ENCODE measurements at regions of chr3 and their contacts with region 1.

Region 1: DNA sequence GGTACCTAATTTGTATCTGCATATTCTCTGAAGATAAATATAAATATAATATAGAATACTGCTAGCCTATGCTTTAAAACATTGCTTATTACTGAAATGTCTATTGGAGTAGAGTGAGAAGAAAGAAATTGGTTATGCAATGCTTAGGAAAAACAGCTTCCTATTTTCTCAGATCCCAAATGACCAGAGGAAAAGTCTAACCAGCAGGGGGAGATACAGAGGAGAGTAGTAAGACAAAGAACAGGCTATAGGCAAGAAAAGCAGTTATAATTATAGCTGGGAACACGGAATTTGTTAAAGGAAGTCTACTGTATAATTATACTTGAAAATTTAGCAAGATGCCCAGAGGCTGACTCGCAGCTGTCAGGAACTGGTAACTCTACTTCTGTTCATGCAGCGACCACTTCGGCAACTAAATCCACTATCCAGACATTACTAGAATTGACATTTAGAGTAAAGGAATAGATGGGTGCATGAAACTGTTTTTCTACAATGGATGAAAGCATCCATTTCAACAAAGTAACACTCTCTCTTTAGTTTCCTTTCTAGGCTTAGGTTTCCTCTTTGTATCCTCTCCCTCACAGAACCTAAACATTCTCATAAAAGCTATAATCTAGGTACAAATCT is 97.2 kb downstream of the TBC1D5 start:
- DNase-seq: peak; percentile 43
- ATAC-seq: peak; percentile 74
- H3K4me3 ChIP-seq: no peak overlapping the region
- H3K27ac ChIP-seq: no peak overlapping the region
- H3K4me1 ChIP-seq: peaks cover 7 to 19% of the 10 kb centered on the region in 2 experiments
- H3K27me3 ChIP-seq: no peaks in the 10 kb centered on the region
- CTCF ChIP-seq: peak; percentile 40 to 77 (median 77); a peak in 5 of 6 replicates
- POLR2A ChIP-seq: no peak
- RAD21 ChIP-seq: peak; percentile 62

Region 2: GRCh38 chr3:17473761-17474160 is 171.4 kb before region 1 on chr3:
- CTCF ChIA-PET with region 1: no interaction called
- POLR2A ChIA-PET with region 1: no interaction called
- RAD21 ChIA-PET with region 1: no interaction called
- intact Hi-C with region 1: no loop called
- DNase-seq: no peak
- ATAC-seq: no peak
- H3K4me3 ChIP-seq: no peak overlapping the region
- H3K27ac ChIP-seq: no peak overlapping the region
- H3K4me1 ChIP-seq: no peaks in the 10 kb centered on the region
- H3K27me3 ChIP-seq: no peaks in the 10 kb centered on the region
- CTCF ChIP-seq: peak in 2 of 3 experiments; percentile 20 to 34; a peak in 3 of 6 replicates
- POLR2A ChIP-seq: no peak
- RAD21 ChIP-seq: peak; percentile 44

Region 3: GRCh38 chr3:17632401-17633100 is 12.6 kb before region 1 on chr3:
- CTCF ChIA-PET with region 1: interaction called, 12 read pairs
- POLR2A ChIA-PET with region 1: no interaction called
- RAD21 ChIA-PET with region 1: no interaction called
- intact Hi-C with region 1: no loop called
- DNase-seq: peak; percentile 31
- ATAC-seq: peak; percentile 63
- H3K4me3 ChIP-seq: no peak overlapping the region; a peak in 1 of 4 replicates
- H3K27ac ChIP-seq: no peak overlapping the region; the same call in 1 of the 2 replicates
- H3K4me1 ChIP-seq: peaks cover 28 to 55% of the 10 kb centered on the region in 2 experiments
- H3K27me3 ChIP-seq: no peaks in the 10 kb centered on the region
- CTCF ChIP-seq: no peak
- POLR2A ChIP-seq: no peak
- RAD21 ChIP-seq: no peak

Region 4: DNA sequence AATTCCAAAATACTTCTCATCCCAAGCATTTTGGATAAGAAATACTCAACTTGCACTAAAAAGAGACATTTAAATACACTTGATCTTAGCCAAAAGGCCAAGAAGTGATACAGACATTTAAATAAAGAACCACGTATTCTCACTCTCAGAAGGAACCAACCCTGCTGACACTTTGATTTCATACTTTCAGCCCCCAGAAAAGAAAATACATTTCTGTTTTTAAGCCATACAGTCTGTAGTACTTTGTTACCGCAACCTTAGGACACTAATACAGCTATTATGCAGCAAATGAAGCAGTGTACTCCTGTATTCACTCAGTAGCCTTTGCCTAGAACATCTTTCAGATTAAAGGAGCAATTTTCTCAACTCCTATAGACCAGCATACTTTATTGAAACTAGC is 10.6 kb after region 1 on chr3:
- CTCF ChIA-PET with region 1: interaction called, 32 read pairs
- POLR2A ChIA-PET with region 1: no interaction called
- RAD21 ChIA-PET with region 1: no interaction called
- intact Hi-C with region 1: no loop called
- DNase-seq: no peak
- ATAC-seq: no peak
- H3K4me3 ChIP-seq: no peak overlapping the region
- H3K27ac ChIP-seq: no peak overlapping the region
- H3K4me1 ChIP-seq: no peaks in the 10 kb centered on the region
- H3K27me3 ChIP-seq: no peaks in the 10 kb centered on the region
- CTCF ChIP-seq: no peak
- POLR2A ChIP-seq: no peak
- RAD21 ChIP-seq: no peak

Measured in HCT116 (cell line).